MCF 10A (cell line): ENCODE measurements at regions of chr1 and their contacts with region 1.

Region 1: DNA sequence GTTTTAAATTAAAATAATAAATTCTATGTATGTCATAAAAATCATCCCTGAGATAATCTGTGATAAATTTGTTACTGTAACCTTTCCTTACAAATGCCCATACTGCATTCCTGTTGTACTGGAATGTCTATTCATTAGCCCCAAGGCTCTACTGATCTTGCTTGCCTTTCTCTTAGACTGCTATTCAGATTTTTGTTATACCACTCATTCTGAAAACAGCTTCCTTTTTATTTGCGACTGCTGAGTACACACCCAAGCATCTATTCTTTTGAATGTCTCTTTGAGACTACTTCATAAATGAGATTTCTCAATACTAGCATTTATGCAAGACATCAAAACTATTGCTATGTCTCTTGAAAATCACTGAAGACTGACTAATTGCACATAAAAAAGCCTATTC is 38.6 kb downstream of the DENND1B start:
- DNase-seq: peak; percentile 62
- H3K4me3 Mint-ChIP-seq: no peak overlapping the region
- H3K27ac Mint-ChIP-seq: no peak overlapping the region
- H3K4me1 Mint-ChIP-seq: peaks cover 18% of the 10 kb centered on the region
- H3K27me3 Mint-ChIP-seq: no peaks in the 10 kb centered on the region
- CTCF ChIP-seq: no peak

Region 2: GRCh38 chr1:197761621-197762020 is 25.0 kb after region 1 on chr1:
- CTCF ChIA-PET with region 1: interaction called, 4 read pairs
- POLR2A ChIA-PET with region 1: interaction called, 10 read pairs
- intact Hi-C with region 1: no loop called
- DNase-seq: no peak
- H3K4me3 Mint-ChIP-seq: no peak overlapping the region
- H3K27ac Mint-ChIP-seq: no peak overlapping the region
- H3K4me1 Mint-ChIP-seq: peaks cover 6% of the 10 kb centered on the region
- H3K27me3 Mint-ChIP-seq: no peaks in the 10 kb centered on the region
- CTCF ChIP-seq: no peak

Region 3: GRCh38 chr1:197775282-197776262 is 38.9 kb after region 1 on chr1 and contains the start of gene DENND1B:
- CTCF ChIA-PET with region 1: no interaction called
- POLR2A ChIA-PET with region 1: interaction called, 17 read pairs
- intact Hi-C with region 1: no loop called
- DNase-seq: peak; percentile 84
- H3K4me3 Mint-ChIP-seq: peak within 1 kb of the TSS; percentile 67
- H3K27ac Mint-ChIP-seq: peak within 1 kb of the TSS; percentile 72
- H3K4me1 Mint-ChIP-seq: peaks cover 45% of the 10 kb centered on the region
- H3K27me3 Mint-ChIP-seq: no peaks in the 10 kb centered on the region
- CTCF ChIP-seq: no peak
- total RNA-seq, gene DENND1B: 19.2 and 20.9 TPM in 2 replicates